ENCODE measurements at regions of chr5 and their contacts with region 1.

Region 1: GRCh38 chr5:139755892-139756671 is 39.5 kb upstream of the PSD2 start:
- DNase-seq: no peak
- ATAC-seq: peak; percentile 80
- H3K4me3 ChIP-seq: peak overlapping the region; percentile 49; the same call in 1 of the 2 replicates
- H3K27ac ChIP-seq: no peak overlapping the region
- H3K4me1 ChIP-seq: no peaks in the 10 kb centered on the region; the same call in 1 of the 2 replicates
- H3K27me3 ChIP-seq: peaks cover 4 to 13% of the 10 kb centered on the region in 2 experiments; a peak in 3 of 4 replicates
- CTCF ChIP-seq: no peak
- EP300 ChIP-seq: no peak
- POLR2A ChIP-seq: no peak
- RAD21 ChIP-seq: no peak

Region 2: GRCh38 chr5:139660923-139661814 is 94.9 kb before region 1 on chr5:
- CTCF ChIA-PET with region 1: no interaction called
- POLR2A ChIA-PET with region 1: interaction called, 11 read pairs
- RAD21 ChIA-PET with region 1: no interaction called
- SMC1A ChIA-PET with region 1: interaction called, 3 read pairs
- in situ Hi-C with region 1: no loop called
- intact Hi-C with region 1: no loop called
- DNase-seq: no peak
- ATAC-seq: peak; percentile 46
- H3K4me3 ChIP-seq: peak overlapping the region; percentile 14; the same call in 1 of the 2 replicates
- H3K27ac ChIP-seq: peak overlapping the region; percentile 67
- H3K4me1 ChIP-seq: peaks cover 97% of the 10 kb centered on the region
- H3K27me3 ChIP-seq: no peaks in the 10 kb centered on the region
- CTCF ChIP-seq: no peak
- EP300 ChIP-seq: no peak
- POLR2A ChIP-seq: no peak
- RAD21 ChIP-seq: no peak